ENCODE measurements at regions of chr15 and their contacts with region 1.

Region 1: DNA sequence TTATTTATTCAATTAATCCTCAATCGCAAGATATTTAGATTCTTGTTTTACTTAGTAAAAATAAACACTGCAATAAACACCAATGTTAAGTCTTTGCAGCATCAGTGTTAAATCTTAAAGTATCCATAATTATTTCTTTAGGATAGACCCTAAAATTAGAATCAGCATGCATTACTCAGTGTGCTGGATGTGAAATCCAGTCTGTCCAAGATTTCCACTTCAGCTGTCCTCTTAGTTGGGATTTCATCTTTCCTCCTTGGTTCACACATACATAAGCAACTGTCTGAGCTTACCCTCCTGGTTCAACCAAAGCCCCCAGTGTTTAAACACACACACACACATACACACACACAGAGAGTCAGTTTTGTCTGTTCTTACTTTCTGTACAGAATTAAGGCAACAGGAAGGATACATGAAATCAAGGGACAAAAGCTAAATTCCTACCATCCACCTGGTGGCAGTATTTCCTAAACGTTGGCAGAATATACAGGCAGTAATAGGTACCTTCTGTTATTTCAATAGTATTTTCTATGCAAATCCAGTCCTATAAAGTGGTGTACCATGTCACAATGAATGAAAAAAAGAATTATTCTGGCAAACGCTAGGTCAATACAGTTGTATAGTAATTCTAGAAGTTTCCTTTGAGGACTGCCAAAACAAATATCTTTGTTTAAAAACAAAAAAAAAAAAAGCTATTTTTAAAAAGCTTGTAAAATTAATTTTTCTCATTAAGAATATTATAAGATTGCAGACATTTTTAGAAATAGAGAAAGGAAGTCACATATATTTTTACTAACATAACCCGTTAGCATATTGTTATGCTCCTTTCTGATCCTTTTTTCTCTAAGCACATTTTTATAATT is 27.3 kb upstream of the DMXL2 start:
- DNase-seq: peak in 1 of 2 donors; percentile 56
- H3K4me3 ChIP-seq: no peak overlapping the region
- CTCF ChIP-seq: peak in 1 of 3 donors; percentile 39
- POLR2A ChIP-seq: no peak

Region 2: DNA sequence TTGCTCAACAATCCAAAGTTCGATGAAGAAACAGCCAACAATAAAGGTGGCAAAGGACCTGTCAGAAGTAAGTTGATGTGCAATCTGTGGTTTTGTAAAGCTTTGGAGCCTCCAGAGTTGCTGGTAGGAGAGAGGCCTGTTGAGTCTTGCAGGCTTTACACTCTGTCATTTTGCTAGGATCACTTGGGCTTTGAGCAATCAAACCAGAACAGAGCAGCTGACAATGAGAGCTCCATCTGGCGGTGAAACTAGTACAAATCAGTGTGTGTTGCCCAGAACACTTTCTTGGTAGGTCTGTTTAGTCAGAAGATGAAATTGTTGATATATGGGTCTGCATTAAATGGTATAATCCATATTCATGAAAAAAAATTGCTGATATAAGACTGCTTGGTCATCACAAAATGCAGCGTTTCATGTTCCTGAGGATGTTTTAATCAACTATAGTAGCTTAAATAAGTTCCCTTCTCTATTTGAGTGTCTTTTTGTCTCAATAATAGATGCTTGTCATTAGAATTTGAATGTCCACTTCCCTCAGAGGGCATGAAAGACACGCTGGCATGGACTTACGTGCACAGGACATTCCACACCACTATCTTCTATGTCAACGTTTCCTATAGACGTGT is 127.2 kb after region 1 on chr15:
- intact Hi-C with region 1: loop called (anchors 2 kb)
- DNase-seq: peak; percentile 81 to 90
- H3K4me3 ChIP-seq: no peak overlapping the region
- CTCF ChIP-seq: no peak
- POLR2A ChIP-seq: no peak

Measured in lower leg skin (tissue), 4 donors.